ENCODE measurements at regions of chr7 and their contacts with region 1.

Region 1: GRCh38 chr7:140403878-140404564 is at the start of gene RAB19:
- DNase-seq: peak; percentile 53
- ATAC-seq: peak; percentile 77
- H3K4me3 ChIP-seq: peak within 1 kb of the TSS; percentile 91
- H3K27ac ChIP-seq: no peak within 1 kb of the TSS
- H3K4me1 ChIP-seq: peaks cover 15% of the 10 kb centered on the region
- H3K27me3 ChIP-seq: no peaks in the 10 kb centered on the region
- CTCF ChIP-seq: no peak
- total RNA-seq, gene RAB19: 0.52 and 1.3 TPM in 2 replicates

Region 2: DNA sequence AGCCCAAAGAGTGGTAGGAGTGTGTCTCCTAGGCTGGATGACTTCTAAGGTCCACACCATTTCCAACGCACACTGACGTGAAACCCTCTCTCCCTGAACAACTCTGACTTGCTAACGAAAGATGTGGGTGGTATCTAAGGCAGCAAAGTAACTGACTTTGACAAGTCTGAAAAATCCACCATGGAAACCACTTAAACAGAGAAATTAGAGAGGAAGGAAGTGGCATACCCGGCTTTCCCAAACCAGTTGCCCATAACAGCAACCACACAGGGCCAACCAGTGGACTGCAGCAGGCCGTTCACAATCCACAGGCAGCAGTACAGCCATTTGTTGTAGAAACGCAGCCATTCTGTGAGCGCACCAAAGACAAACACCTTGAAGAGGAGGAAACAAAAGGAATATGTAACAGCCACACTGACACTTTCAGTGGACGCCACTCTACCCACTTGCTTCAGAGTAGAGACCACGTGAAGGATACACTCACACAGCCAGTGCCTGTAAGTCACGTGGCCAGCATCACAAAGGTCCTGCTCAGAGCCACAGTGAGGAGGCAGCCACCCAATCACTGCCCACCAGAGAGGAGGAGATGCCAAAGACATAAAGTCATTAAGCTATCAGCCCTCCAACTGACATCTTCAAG is 45.5 kb before region 1 on chr7:
- CTCF ChIA-PET with region 1: no interaction called
- POLR2A ChIA-PET with region 1: no interaction called
- intact Hi-C with region 1: no loop called
- DNase-seq: no peak
- ATAC-seq: no peak
- H3K4me3 ChIP-seq: no peak overlapping the region
- H3K27ac ChIP-seq: no peak overlapping the region
- H3K4me1 ChIP-seq: no peaks in the 10 kb centered on the region
- H3K27me3 ChIP-seq: no peaks in the 10 kb centered on the region
- CTCF ChIP-seq: no peak

Region 3: DNA sequence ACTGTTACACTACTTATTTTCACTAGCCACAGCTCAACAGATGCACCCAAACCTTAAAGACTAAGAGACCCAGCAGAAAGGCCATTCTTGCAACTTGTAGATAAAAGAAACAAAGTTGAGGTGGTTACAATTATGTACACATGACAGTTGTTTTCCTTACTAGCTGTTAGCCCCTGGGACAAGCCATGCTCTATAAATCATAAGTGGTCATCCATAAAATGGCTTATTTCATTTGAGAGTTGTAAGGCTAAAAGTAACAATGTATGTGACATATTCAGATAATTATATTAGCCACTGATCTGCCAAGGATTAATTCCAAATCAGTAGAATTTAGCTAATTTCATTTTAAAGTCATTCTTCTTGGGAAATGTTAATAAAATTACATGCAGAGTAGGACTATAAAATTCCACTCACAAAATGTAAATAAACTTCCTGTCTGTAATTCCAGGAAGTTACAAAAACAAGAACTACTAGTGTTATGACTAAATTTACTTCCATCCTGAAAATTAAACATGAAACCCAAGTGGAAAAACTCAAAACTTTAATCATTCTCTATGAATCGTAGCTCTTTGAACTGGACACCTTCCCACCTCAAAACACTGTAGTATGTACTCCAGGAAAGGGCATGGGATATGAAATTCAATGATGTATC is 19.0 kb before region 1 on chr7:
- CTCF ChIA-PET with region 1: no interaction called
- POLR2A ChIA-PET with region 1: no interaction called
- intact Hi-C with region 1: no loop called
- DNase-seq: peak; percentile 4
- ATAC-seq: peak; percentile 60
- H3K4me3 ChIP-seq: no peak overlapping the region
- H3K27ac ChIP-seq: no peak overlapping the region
- H3K4me1 ChIP-seq: peaks cover 6% of the 10 kb centered on the region; the same call in 1 of the 2 replicates
- H3K27me3 ChIP-seq: no peaks in the 10 kb centered on the region
- CTCF ChIP-seq: no peak

Region 4: DNA sequence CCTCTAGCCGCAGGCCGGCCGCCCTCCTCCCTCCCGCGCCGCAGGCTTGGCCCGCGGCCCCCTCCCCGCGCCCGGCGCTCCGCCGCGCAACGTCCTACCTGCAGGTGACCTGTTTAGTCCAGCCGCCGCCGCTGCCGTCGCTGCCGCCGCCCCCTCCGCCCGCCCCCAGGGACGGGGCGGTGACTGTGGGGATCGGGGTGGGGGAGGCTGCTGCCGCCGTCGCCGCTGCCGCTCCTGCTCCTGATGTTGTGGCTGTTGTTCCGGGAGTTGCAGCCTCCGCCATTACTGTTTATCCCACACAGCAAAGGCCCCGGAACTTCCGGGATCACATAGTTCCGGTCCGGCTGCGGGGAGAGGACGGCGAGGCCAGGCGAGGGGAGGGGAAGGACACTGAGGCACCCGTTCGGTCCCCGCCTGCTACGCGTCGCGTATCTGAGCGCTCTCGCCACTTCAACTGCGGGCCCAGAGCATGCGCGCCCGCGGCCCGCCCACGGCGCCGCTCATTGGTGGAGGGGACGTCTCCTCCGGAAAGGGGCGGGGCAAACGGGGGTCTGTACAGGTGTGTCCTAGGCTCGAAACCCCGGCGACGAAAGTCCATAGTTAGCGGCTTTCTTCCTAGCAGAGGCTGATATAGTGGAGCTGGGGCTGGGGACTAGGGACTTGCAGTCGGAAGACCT is 75.2 kb after region 1 on chr7 and contains the start of gene MKRN1:
- CTCF ChIA-PET with region 1: no interaction called
- POLR2A ChIA-PET with region 1: no interaction called
- intact Hi-C with region 1: loop called (anchors 5 kb)
- DNase-seq: peak; percentile 95
- ATAC-seq: peak; percentile 93
- H3K4me3 ChIP-seq: peak within 1 kb of the TSS; percentile 99
- H3K27ac ChIP-seq: peak within 1 kb of the TSS; percentile 58
- H3K4me1 ChIP-seq: no peaks in the 10 kb centered on the region; the same call in 1 of the 2 replicates
- H3K27me3 ChIP-seq: no peaks in the 10 kb centered on the region
- CTCF ChIP-seq: no peak
- total RNA-seq, gene MKRN1: 71.9 and 78.5 TPM in 2 replicates